Heart left ventricle (tissue), 16 donors: ENCODE measurements at regions of chr1 and their contacts with region 1.

Region 1: GRCh38 chr1:3423245-3423829 is 31.1 kb upstream of the ARHGEF16 start:
- DNase-seq: peak; percentile 86 to 95 (median 90)
- ATAC-seq: peak; percentile 91 to 96 (median 92)
- H3K4me3 ChIP-seq: peak overlapping the region in 1 of 12 donors; percentile 44
- H3K27ac ChIP-seq: peak overlapping the region; percentile 39 to 95 (median 83)
- H3K4me1 ChIP-seq: peaks cover 11 to 41% (median 31%) of the 10 kb centered on the region in 12 donors
- H3K27me3 ChIP-seq: no peaks in the 10 kb centered on the region
- CTCF ChIP-seq: no peak
- POLR2A ChIP-seq: peak in 1 of 2 donors; percentile 22

Region 2: DNA sequence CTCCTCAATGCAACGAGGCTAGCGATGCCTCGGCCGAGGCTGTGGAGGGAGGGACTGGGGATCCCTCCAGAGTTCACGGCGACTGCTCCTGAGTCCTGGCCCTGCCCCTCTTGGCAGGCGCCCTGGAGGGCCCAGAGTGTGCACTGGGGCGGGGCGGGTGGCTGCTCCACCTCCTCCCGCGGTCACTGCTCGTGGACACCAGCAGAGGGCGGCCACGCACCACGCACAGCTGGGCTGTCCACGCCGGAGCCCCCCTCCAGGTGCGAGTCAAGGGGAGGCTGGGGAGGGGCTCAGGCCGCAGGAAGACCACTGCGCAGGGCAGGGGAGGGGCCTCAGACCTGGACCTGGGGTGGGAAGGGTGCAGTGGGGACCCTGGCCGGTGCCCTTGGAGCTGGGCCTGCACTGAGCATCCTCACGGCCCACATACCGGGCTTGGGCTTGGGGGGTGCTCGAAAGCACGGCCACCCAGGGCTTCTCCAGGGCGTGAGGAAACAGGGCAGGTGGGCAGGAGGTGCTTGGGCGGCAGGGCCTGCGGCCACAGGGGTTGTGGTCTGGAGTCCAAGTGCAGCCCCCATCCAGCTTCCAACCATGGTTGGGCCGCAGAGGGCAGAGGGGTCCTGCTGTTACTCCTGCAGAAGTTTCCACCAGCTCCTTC is 601.2 kb before region 1 on chr1:
- intact Hi-C with region 1: loop called (anchors 1 to 10 kb)
- DNase-seq: peak in 4 of 5 donors; percentile 40 to 71 (median 52)
- ATAC-seq: peak; percentile 79 to 88 (median 82)
- H3K4me3 ChIP-seq: no peak overlapping the region
- H3K27ac ChIP-seq: no peak overlapping the region
- H3K4me1 ChIP-seq: peaks cover 0 to 6% (median 0%) of the 10 kb centered on the region in 12 donors
- H3K27me3 ChIP-seq: peaks cover 0 to 30% (median 5%) of the 10 kb centered on the region in 9 donors
- CTCF ChIP-seq: peak; percentile 56 to 71 (median 62)
- POLR2A ChIP-seq: no peak

Region 3: GRCh38 chr1:2875707-2876561 is 547.4 kb before region 1 on chr1:
- intact Hi-C with region 1: loop called in 5 of 10 experiments (anchors 5 to 10 kb)
- DNase-seq: peak in 1 of 5 donors; percentile 42
- ATAC-seq: peak in 2 of 4 donors; percentile 50 to 68
- H3K4me3 ChIP-seq: no peak overlapping the region
- H3K27ac ChIP-seq: no peak overlapping the region
- H3K4me1 ChIP-seq: peaks cover 0 to 7% (median 0%) of the 10 kb centered on the region in 12 donors
- H3K27me3 ChIP-seq: peaks cover 0 to 21% (median 2%) of the 10 kb centered on the region in 9 donors
- CTCF ChIP-seq: peak; percentile 15 to 62 (median 44)
- POLR2A ChIP-seq: no peak

Region 4: DNA sequence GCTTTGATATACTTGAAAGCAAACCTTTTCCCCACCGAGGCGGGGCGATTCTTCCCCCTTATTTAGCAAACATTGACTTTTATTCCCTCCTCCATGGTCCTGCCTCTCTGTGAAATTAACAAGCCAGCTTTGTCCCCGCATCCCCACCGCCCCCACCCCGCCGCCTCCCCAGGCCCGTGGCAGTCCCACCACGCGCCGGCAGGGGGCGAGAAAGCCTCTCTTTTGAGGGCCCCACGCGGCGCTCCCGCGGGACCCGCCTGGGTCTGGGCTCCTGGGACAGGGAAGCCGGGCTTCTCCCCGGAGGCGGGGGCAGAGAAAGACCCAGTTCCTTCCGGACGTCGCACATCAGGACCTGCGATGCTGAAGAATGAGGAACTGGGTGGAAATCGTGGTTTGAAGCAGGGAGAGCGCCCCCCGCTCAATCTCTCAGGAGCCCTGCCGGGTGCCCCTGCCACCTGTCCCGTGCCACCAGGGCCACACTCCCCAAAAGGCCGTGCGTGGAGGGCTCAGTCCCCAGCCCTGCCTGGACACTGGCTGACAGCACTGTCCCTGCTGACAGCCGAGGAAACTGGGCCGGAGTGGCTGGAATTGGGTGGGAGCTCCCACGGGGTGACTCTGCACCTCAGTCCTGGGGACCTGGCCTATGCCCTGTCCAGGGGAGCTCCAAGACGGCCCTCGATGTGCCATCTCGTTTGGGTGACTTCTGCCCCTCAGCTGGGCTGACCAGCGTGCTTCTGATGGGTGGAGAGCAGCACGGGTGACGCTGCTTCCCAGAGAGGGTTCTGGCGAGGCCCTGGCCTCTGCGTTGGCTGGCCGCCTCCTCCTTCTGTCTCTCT is 410.7 kb before region 1 on chr1:
- intact Hi-C with region 1: loop called (anchors 1 to 5 kb)
- DNase-seq: peak; percentile 35 to 81 (median 42)
- ATAC-seq: peak in 3 of 4 donors; percentile 74 to 88 (median 79)
- H3K4me3 ChIP-seq: no peak overlapping the region
- H3K27ac ChIP-seq: no peak overlapping the region
- H3K4me1 ChIP-seq: peaks cover 0 to 7% (median 0%) of the 10 kb centered on the region in 12 donors
- H3K27me3 ChIP-seq: peaks cover 0 to 41% (median 6%) of the 10 kb centered on the region in 9 donors
- CTCF ChIP-seq: peak; percentile 74 to 96 (median 80)
- POLR2A ChIP-seq: no peak

Region 5: GRCh38 chr1:3319874-3320245 is 103.5 kb before region 1 on chr1:
- intact Hi-C with region 1: loop called in 1 of 10 experiments (anchors 5 kb)
- DNase-seq: peak in 1 of 5 donors; percentile 25
- ATAC-seq: peak in 3 of 4 donors; percentile 25 to 35 (median 33)
- H3K4me3 ChIP-seq: no peak overlapping the region
- H3K27ac ChIP-seq: no peak overlapping the region
- H3K4me1 ChIP-seq: peaks cover 4 to 56% (median 26%) of the 10 kb centered on the region in 12 donors
- H3K27me3 ChIP-seq: peaks cover 0 to 8% (median 0%) of the 10 kb centered on the region in 9 donors
- CTCF ChIP-seq: peak; percentile 51 to 74 (median 68)
- POLR2A ChIP-seq: no peak

Region 6: DNA sequence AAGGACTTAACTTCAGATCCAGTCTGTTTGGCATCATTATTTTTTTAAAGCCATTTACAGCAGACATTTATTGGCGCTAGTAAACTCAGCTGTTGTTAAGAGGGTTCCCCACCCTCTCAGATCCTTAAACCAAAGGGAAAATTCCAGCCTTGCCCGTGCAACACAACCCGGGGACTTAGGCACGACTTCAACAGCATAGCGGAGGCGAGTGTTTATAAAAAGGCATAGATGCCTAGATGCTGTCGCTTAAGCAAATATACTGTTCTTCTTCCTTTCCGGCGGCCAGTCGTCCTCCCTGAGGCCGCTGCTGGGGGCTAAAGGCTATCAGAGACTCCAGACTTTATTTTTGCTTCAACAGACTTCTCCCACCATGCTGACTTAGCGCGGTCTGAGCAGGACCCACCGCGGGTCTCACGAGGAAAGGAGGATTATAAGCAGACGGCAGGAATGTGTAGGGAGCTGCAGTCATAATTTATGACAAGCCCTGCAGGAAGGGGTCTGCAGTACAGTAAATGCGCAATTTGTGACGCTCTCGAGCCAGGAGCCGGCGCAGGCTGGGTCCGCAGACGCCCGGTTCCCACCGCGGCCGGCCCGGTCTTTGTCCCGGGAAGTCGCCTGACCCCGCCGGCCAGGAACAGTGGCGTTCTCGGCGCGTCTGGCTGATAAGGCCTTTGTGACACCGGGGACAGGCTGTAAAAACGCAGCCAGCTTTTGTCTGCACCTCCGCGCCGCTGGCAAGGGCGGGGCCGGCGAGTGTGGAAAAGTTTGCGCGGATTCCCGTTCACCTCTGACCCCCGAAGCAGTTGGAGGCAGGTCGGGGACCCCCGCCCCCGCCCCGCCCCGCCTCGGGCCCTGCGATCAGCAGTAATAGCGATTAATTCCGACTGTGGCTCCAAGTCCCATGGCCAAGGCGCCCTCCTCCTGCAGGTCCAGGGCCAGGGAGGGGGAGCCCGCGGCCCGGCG is 30.0 kb before region 1 on chr1:
- intact Hi-C with region 1: no loop called
- DNase-seq: peak; percentile 72 to 89 (median 76)
- ATAC-seq: peak; percentile 81 to 91 (median 84)
- H3K4me3 ChIP-seq: peak overlapping the region; percentile 23 to 62 (median 50)
- H3K27ac ChIP-seq: peak overlapping the region; percentile 44 to 90 (median 76)
- H3K4me1 ChIP-seq: peaks cover 0 to 32% (median 13%) of the 10 kb centered on the region in 12 donors
- H3K27me3 ChIP-seq: peaks cover 0 to 34% (median 4%) of the 10 kb centered on the region in 9 donors
- CTCF ChIP-seq: peak in 3 of 12 donors; percentile 13 to 24 (median 20)
- POLR2A ChIP-seq: peak in 1 of 2 donors; percentile 39